ENCODE measurements at regions of chr6 and their contacts with region 1.

Region 1: GRCh38 chr6:30883685-30884520 is at the start of gene DDR1:
- DNase-seq: peak; percentile 95
- H3K4me3 Mint-ChIP-seq: peak within 1 kb of the TSS; percentile 83
- H3K27ac Mint-ChIP-seq: peak within 1 kb of the TSS; percentile 95
- H3K4me1 Mint-ChIP-seq: peaks cover 49% of the 10 kb centered on the region
- H3K27me3 Mint-ChIP-seq: no peaks in the 10 kb centered on the region
- CTCF ChIP-seq: no peak
- total RNA-seq, gene DDR1: 59.7 and 66.0 TPM in 2 replicates

Region 2: GRCh38 chr6:29608131-29608530 is 1275.8 kb before region 1 on chr6:
- CTCF ChIA-PET with region 1: no interaction called
- POLR2A ChIA-PET with region 1: no interaction called
- intact Hi-C with region 1: no loop called
- DNase-seq: no peak
- H3K4me3 Mint-ChIP-seq: no peak overlapping the region
- H3K27ac Mint-ChIP-seq: no peak overlapping the region
- H3K4me1 Mint-ChIP-seq: no peaks in the 10 kb centered on the region
- H3K27me3 Mint-ChIP-seq: no peaks in the 10 kb centered on the region
- CTCF ChIP-seq: no peak

Region 3: GRCh38 chr6:30616811-30617564 is 266.9 kb before region 1 on chr6 and contains the start of gene PPP1R10:
- CTCF ChIA-PET with region 1: no interaction called
- POLR2A ChIA-PET with region 1: interaction called, 10 read pairs
- intact Hi-C with region 1: no loop called
- DNase-seq: peak; percentile 100
- H3K4me3 Mint-ChIP-seq: peak within 1 kb of the TSS; percentile 83
- H3K27ac Mint-ChIP-seq: peak within 1 kb of the TSS; percentile 99
- H3K4me1 Mint-ChIP-seq: peaks cover 26% of the 10 kb centered on the region
- H3K27me3 Mint-ChIP-seq: no peaks in the 10 kb centered on the region
- CTCF ChIP-seq: no peak
- total RNA-seq, gene PPP1R10: 103 and 209 TPM in 2 replicates

Region 4: GRCh38 chr6:30730601-30731435 is 153.1 kb before region 1 on chr6:
- CTCF ChIA-PET with region 1: interaction called, 9 read pairs
- POLR2A ChIA-PET with region 1: interaction called, 14 read pairs
- intact Hi-C with region 1: no loop called
- DNase-seq: peak; percentile 91
- H3K4me3 Mint-ChIP-seq: no peak overlapping the region
- H3K27ac Mint-ChIP-seq: no peak overlapping the region
- H3K4me1 Mint-ChIP-seq: peaks cover 7% of the 10 kb centered on the region
- H3K27me3 Mint-ChIP-seq: no peaks in the 10 kb centered on the region
- CTCF ChIP-seq: peak; percentile 86

Region 5: GRCh38 chr6:30821862-30822782 is 61.8 kb before region 1 on chr6:
- CTCF ChIA-PET with region 1: interaction called, 92 read pairs
- POLR2A ChIA-PET with region 1: interaction called, 80 read pairs
- intact Hi-C with region 1: no loop called
- DNase-seq: peak; percentile 65
- H3K4me3 Mint-ChIP-seq: no peak overlapping the region
- H3K27ac Mint-ChIP-seq: peak overlapping the region; percentile 63
- H3K4me1 Mint-ChIP-seq: peaks cover 50% of the 10 kb centered on the region
- H3K27me3 Mint-ChIP-seq: no peaks in the 10 kb centered on the region
- CTCF ChIP-seq: peak; percentile 54

Region 6: DNA sequence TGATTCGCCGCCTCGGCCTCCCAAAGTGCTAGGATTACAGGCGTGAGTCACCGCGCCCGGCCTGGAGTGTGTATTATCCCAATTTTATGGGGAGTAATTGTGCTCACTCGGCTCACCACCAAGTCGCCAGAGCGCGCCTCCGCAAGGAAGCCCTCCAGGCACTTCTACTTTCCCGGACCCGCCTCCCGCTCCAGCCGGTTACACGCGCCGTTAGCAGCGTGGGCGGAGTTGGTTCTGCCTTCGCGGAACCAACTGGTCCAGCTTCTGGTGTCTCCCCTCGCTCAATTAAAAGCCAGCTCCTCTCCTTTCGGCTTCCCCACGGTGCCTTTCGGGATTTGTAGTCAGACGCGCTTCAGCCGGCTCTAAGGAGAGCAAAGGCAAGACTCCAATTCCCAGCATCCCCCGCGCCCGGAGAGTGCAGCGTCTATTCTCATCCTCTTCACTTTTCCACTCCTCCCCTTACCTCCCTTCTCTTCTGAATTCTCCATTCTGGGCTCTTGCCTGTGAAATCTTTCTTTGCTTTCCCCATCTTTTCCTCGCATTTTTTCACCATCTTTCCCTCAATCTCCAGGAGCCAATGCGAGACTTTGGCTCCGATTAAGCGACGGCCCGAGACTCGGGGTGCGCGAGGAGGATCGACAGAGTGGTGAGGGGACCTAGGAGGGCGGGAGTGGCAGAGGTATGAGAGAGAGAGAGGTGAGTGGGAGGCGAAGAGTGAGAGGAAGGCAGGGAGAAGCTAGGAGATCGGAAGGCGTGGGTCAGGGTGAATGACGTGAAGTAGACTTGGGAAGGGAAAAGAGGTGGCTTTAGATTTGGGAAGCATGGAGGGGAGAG is 24.1 kb after region 1 on chr6 and contains the start of gene GTF2H4:
- CTCF ChIA-PET with region 1: interaction called, 19 read pairs
- POLR2A ChIA-PET with region 1: interaction called, 100 read pairs
- intact Hi-C with region 1: loop called (anchors 2 kb)
- DNase-seq: peak; percentile 100
- H3K4me3 Mint-ChIP-seq: peak within 1 kb of the TSS; percentile 96
- H3K27ac Mint-ChIP-seq: peak within 1 kb of the TSS; percentile 57
- H3K4me1 Mint-ChIP-seq: peaks cover 16% of the 10 kb centered on the region
- H3K27me3 Mint-ChIP-seq: no peaks in the 10 kb centered on the region
- CTCF ChIP-seq: no peak
- total RNA-seq, gene GTF2H4: 30.6 and 33.9 TPM in 2 replicates

Region 7: DNA sequence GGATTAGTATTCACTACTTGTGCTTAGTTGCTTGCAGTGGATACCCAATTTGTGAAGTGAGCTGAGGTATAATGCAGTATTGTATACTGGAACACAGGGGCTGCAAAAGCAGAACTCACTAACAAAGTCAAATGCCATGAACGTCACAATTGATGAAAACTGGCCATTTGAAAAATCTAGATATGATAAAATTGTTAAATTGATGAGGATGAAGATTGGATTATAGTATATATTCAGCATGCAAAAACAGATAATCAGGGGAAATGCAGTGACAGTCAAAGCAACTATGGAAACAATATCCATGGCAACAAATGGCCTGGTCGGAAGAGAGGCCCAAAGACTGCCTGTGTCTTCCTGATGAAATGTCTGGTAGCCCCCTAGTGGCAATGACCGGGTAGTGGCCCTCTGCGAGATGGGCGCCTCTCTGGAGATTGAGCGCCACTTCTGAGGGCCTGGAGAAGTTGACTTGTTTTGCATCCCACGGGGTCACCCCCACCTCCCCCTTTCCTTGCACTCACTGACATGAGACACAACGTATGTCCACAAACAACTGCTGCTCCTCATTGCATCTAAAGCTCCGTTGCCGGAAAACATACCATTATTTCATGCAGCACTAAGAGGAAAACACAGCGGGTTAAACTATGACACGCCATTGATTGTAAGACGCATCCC is 184.9 kb after region 1 on chr6:
- CTCF ChIA-PET with region 1: interaction called, 12 read pairs
- POLR2A ChIA-PET with region 1: interaction called, 17 read pairs
- intact Hi-C with region 1: no loop called
- DNase-seq: peak; percentile 82
- H3K4me3 Mint-ChIP-seq: no peak overlapping the region
- H3K27ac Mint-ChIP-seq: no peak overlapping the region
- H3K4me1 Mint-ChIP-seq: peaks cover 5% of the 10 kb centered on the region
- H3K27me3 Mint-ChIP-seq: no peaks in the 10 kb centered on the region
- CTCF ChIP-seq: peak; percentile 81

Region 8: GRCh38 chr6:31087494-31088089 is 203.7 kb after region 1 on chr6:
- CTCF ChIA-PET with region 1: interaction called, 11 read pairs
- POLR2A ChIA-PET with region 1: interaction called, 6 read pairs
- intact Hi-C with region 1: no loop called
- DNase-seq: peak; percentile 91
- H3K4me3 Mint-ChIP-seq: no peak overlapping the region
- H3K27ac Mint-ChIP-seq: peak overlapping the region; percentile 16
- H3K4me1 Mint-ChIP-seq: peaks cover 21% of the 10 kb centered on the region
- H3K27me3 Mint-ChIP-seq: no peaks in the 10 kb centered on the region
- CTCF ChIP-seq: peak; percentile 65

Region 9: GRCh38 chr6:31386977-31387376 is 503.1 kb after region 1 on chr6:
- CTCF ChIA-PET with region 1: no interaction called
- POLR2A ChIA-PET with region 1: no interaction called
- intact Hi-C with region 1: no loop called
- DNase-seq: no peak
- H3K4me3 Mint-ChIP-seq: no peak overlapping the region
- H3K27ac Mint-ChIP-seq: no peak overlapping the region
- H3K4me1 Mint-ChIP-seq: peaks cover 15% of the 10 kb centered on the region
- H3K27me3 Mint-ChIP-seq: no peaks in the 10 kb centered on the region
- CTCF ChIP-seq: no peak